ENCODE measurements at regions of chr4 and their contacts with region 1.

Region 1: DNA sequence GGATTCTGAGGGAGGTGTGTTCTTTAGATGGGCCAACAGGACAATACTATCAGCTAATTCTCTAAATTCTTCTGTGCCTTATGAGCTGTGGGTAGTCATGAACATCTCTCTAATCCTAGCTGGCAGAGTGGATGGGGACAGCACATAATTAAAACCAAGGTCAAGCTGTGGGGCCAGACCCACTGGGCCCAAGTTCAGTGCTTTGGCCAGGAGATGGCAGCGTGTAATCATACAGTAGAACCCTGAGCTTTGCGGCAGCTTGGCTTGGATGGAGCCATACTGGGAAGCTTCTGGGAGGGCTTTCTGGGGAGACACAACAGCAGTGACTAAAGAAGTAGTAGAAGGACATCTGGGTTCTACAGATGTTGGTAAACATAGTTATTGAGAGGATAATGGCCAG is 140.3 kb upstream of the CXCL13 start:
- DNase-seq: no peak
- ATAC-seq: no peak

Region 2: GRCh38 chr4:77579406-77580076 is 114.3 kb after region 1 on chr4:
- intact Hi-C with region 1: no loop called
- DNase-seq: no peak
- ATAC-seq: no peak

Region 3: DNA sequence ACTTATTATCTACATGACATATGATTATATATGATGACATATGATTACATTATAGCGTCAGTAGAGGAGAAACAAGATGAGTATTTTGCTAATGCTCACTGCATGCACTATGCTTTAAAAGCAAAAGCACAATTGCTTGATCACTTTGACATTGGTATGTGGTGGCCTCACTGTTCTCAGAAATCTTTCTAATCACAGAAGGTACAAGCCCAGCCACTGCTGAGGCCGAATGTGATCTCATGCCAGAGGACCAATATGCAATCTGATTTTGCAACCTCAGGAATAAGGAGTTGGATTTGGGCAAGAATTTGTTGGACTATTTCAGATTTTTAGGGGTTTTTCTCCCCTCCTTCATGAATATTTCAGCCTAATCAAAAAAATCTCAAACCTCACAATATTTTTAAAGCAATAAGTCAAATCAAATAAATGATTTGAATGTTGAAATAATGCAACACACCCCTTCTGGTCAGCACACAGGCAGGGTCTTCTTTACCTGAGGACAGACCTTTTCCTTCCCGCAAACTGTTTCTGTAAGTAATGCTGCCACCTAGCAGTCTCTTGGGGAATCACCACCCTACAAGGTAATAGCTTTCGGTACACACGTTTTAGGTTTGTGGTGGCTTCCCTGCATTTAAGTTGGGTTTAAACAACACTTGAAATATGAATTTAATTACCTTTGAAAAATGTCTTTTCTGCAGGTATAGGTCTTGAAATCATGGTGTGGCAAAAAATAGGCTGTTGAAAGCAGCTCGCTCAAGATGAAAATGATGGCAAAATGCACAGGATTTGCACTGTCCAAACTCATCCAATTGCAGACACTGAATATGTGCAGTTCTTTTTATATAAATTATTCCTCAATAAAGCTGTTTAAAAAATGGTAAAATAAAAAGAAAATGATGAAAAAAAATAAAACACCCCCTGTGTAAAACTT is 135.5 kb after region 1 on chr4:
- intact Hi-C with region 1: loop called (anchors 10 kb)
- DNase-seq: no peak
- ATAC-seq: peak; percentile 67

Measured in Right ventricle myocardium superior (tissue), 1 donor.